T-cell (primary cell): ENCODE measurements at regions of chr2 and their contacts with region 1.

Region 1: DNA sequence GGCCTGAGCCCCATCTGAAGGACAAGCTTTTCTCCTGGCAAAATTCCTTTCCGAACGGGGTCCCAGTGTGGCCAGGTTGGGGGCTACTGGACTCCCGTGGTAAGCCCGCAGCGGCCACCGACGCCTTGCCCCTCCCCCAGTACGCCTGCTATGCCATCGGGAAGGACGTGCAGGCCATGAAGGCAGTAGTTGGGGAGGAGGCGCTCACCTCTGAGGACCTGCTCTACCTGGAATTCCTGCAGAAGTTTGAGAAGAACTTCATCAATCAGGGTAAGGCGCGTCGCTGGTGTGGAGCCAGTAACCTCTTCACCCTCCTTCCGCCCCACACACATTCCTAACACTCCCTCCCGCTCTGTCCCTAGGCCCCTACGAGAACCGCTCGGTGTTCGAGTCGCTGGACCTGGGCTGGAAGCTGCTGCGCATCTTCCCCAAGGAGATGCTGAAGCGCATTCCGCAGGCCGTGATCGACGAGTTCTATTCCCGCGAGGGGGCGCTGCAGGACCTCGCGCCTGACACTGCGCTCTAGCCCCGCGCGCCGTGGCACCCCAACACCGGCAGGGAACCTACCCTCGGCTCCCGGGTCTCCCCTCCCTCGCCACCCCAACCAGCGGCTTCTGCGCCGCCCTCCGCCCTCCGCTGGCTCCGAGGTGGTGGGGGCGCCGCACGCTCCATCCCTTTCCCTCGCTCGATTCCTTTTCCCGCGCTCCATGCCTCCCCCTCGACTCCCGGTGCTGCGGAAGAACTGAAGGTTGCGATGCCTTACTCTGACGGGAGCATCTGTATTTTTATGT is 13.6 kb upstream of the ANKRD53 start:
- DNase-seq: peak; percentile 63 to 92 (median 79)
- ATAC-seq: peak; percentile 93 to 98 (median 96)
- H3K4me3 ChIP-seq: peak overlapping the region; percentile 54 to 73
- H3K4me3 Mint-ChIP-seq: peak overlapping the region; percentile 82 to 85 (median 84)
- H3K27ac ChIP-seq: no peak overlapping the region
- H3K27ac Mint-ChIP-seq: peak overlapping the region in 1 of 2 donors; percentile 72
- H3K4me1 ChIP-seq: peaks cover 2 to 15% of the 10 kb centered on the region in 2 experiments
- H3K4me1 Mint-ChIP-seq: peaks cover 6 to 9% (median 7%) of the 10 kb centered on the region in 3 donors
- H3K27me3 ChIP-seq: peaks cover 3 to 57% of the 10 kb centered on the region in 2 experiments
- H3K27me3 Mint-ChIP-seq: peaks cover 17 to 27% of the 10 kb centered on the region in 2 donors

Region 2: GRCh38 chr2:71000780-71001591 is 36.2 kb after region 1 on chr2:
- CTCF ChIA-PET with region 1: interaction called, 10 to 12 read pairs
- POLR2A ChIA-PET with region 1: interaction called in 1 of 2 experiments, 3 read pairs
- DNase-seq: peak; percentile 62 to 91 (median 74)
- ATAC-seq: peak; percentile 93 to 98 (median 98)
- H3K4me3 ChIP-seq: peak overlapping the region in 1 of 2 donors; percentile 27
- H3K4me3 Mint-ChIP-seq: peak overlapping the region; percentile 47 to 61 (median 56)
- H3K27ac ChIP-seq: peak overlapping the region; percentile 5
- H3K27ac Mint-ChIP-seq: peak overlapping the region; percentile 40 to 78
- H3K4me1 ChIP-seq: peaks cover 0 to 11% of the 10 kb centered on the region in 2 experiments
- H3K4me1 Mint-ChIP-seq: peaks cover 8 to 15% (median 11%) of the 10 kb centered on the region in 3 donors
- H3K27me3 ChIP-seq: peaks cover 0 to 13% of the 10 kb centered on the region in 2 experiments
- H3K27me3 Mint-ChIP-seq: peaks cover 5 to 8% of the 10 kb centered on the region in 2 donors